ENCODE measurements at regions of chr10 and their contacts with region 1.

Region 1: DNA sequence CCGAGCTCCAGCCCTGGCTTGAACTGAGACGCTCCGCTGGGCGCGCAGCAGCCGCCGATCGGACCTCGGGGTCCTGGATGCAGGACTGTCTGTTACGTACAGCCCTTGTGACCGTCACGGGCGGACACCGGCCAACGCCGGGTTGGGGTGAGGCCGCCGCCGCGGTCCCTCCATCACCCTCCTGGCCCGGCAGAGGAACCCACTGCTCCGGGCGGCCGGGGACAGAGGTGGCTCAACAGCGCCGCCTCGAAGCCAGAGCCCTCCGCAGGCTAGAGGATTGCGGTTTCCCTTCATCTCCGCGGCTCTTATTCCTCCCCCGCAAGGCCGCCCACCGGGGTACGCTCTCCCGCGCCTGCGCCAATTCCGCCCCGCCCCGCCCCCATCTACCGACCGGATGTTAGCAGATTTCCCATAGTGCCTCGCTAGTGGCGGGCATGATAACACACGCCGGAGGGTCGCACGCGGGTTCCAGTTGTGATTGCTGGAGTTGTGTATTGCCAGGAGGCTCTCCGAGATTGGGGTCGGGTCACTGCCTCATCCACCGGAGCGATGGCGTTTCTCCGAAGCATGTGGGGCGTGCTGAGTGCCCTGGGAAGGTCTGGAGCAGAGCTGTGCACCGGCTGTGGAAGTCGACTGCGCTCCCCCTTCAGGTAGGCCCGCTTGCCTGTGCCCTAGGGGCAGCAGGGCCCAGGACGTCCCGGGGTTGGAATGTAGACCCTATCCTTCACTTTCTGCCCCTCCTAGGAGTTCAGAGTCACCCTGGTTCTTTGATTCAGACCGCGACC is at the start of gene TFAM:
- DNase-seq: peak; percentile 92
- H3K4me3 Mint-ChIP-seq: peak within 1 kb of the TSS; percentile 99
- H3K27ac Mint-ChIP-seq: peak within 1 kb of the TSS; percentile 98
- H3K4me1 Mint-ChIP-seq: peaks cover 51% of the 10 kb centered on the region
- H3K27me3 Mint-ChIP-seq: peaks cover 2% of the 10 kb centered on the region
- total RNA-seq, gene TFAM: 99.9 and 106 TPM in 2 replicates

Region 2: DNA sequence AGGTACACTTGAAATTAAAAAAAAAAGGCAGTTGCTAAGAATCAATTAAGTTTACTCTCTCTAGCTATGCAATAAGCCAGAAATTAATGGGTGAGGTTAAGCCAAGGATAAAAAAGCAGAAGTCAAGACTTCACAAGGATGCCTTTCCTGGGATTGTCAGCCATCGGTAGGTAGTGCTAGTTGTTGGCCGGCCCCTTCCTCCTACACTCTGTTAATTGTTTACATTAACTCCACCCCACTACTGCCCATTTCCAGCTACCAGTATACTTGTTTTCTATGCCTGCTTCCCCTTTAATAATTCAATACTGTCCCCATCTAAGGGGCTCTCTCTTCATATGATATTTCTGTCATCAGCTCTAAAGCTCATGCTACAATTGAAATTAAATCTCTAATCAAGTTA is 578.5 kb before region 1 on chr10:
- intact Hi-C with region 1: no loop called
- DNase-seq: no peak
- H3K4me3 Mint-ChIP-seq: no peak overlapping the region
- H3K27ac Mint-ChIP-seq: no peak overlapping the region
- H3K4me1 Mint-ChIP-seq: no peaks in the 10 kb centered on the region
- H3K27me3 Mint-ChIP-seq: no peaks in the 10 kb centered on the region

Region 3: DNA sequence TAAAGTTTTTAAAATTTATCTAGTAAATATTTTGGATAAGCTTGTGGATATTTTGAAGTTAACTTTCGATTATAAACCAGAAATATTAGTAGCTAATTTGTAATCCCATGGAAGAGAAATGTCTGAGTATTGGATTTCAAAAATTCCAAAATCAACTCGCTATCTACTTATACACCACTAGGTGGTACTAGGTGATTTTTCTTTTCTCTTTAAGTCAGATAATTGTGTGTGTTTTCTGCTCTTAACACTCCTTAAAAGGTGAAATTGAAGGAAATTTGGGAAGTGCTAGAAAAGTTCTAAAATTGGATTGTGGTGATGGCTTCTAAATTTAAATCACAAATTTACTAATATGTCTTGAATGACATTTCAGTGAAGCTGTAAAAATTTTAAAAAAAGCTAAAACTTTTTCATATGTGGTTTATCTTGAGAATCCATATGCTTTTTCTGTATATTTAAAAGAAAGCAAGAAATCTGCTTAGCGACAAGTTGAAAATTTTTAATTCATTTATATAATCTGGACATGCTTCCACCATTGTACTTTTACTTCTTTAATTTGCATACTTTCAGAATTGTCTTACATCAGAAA is 207.7 kb before region 1 on chr10:
- intact Hi-C with region 1: loop called (anchors 1 kb)
- DNase-seq: no peak
- H3K4me3 Mint-ChIP-seq: no peak overlapping the region
- H3K27ac Mint-ChIP-seq: no peak overlapping the region
- H3K4me1 Mint-ChIP-seq: no peaks in the 10 kb centered on the region
- H3K27me3 Mint-ChIP-seq: peaks cover 3% of the 10 kb centered on the region

Region 4: GRCh38 chr10:58282615-58283014 is 102.6 kb before region 1 on chr10:
- intact Hi-C with region 1: loop called (anchors 1 kb)
- DNase-seq: peak; percentile 30
- H3K4me3 Mint-ChIP-seq: peak overlapping the region; percentile 23
- H3K27ac Mint-ChIP-seq: peak overlapping the region; percentile 10
- H3K4me1 Mint-ChIP-seq: peaks cover 35% of the 10 kb centered on the region
- H3K27me3 Mint-ChIP-seq: no peaks in the 10 kb centered on the region

Region 5: GRCh38 chr10:58334817-58335305 is 50.3 kb before region 1 on chr10 and contains the start of gene UBE2D1:
- intact Hi-C with region 1: loop called (anchors 1 kb)
- DNase-seq: peak; percentile 73
- H3K4me3 Mint-ChIP-seq: peak within 1 kb of the TSS; percentile 92
- H3K27ac Mint-ChIP-seq: peak within 1 kb of the TSS; percentile 80
- H3K4me1 Mint-ChIP-seq: peaks cover 14% of the 10 kb centered on the region
- H3K27me3 Mint-ChIP-seq: peaks cover 8% of the 10 kb centered on the region
- total RNA-seq, gene UBE2D1: 17.9 and 19.6 TPM in 2 replicates

Region 6: DNA sequence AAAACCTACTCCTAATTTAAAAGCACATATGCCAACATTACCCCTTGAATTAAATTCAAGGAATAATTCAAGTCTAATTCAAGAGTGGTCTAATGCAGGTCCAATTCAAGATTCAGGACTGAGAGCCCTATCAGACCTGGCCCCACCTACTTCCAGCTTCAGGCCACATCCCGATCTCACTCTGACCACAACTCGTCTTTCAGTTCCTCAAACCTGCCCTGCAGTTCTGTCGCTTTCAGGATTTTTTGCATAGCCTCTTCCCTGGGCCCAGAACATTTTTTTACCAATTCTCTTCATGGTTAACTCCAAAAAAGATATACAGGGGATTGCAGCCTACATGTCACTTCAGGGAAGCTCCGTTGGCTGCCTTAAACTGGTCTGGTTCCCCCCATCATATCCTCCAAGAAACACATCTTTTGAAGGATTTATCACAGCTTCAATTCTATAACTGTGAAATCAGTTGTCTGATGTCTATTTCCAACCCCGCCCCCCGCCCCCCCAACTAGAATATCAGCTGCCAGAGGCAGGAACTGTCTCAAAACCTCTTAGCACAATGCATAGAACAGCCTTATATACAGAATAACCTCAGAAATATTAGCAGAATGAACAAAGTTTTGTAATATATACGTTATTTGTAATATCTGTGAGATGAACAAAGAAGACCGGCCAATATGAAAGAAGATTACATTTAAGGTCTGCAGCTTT is 1500.4 kb after region 1 on chr10:
- intact Hi-C with region 1: loop called (anchors 2 kb)
- DNase-seq: no peak
- H3K4me3 Mint-ChIP-seq: peak overlapping the region; percentile 63
- H3K27ac Mint-ChIP-seq: peak overlapping the region; percentile 94
- H3K4me1 Mint-ChIP-seq: peaks cover 88% of the 10 kb centered on the region
- H3K27me3 Mint-ChIP-seq: no peaks in the 10 kb centered on the region

Measured in activated T-helper 1 cell treated with anti-CD3 and anti-CD28 coated beads, Interleukin-12 subunit alpha, Interleukin-12 subunit beta, Interleukin-2, Interleukin-4 antibody, amounts not matched to agents 30 ng/mL and 10 ng/mL and 1 ng/mL, durations not matched to agents 14 hours and 24 hours and 36 hours (primary cell).